Dendritic cell treated with granulocyte-macrophage colony-stimulating factor and Interleukin-4, amounts not matched to agents 40 ng/mL and 50 ng/mL, for 4 days (primary cell): ENCODE measurements at regions of chr11 and their contacts with region 1.

Region 1: GRCh38 chr11:57751676-57752253 is at the start of gene BTBD18:
- H3K4me3 Mint-ChIP-seq: no peak within 1 kb of the TSS
- H3K27ac Mint-ChIP-seq: no peak within 1 kb of the TSS
- H3K4me1 Mint-ChIP-seq: peaks cover 6% of the 10 kb centered on the region
- H3K27me3 Mint-ChIP-seq: no peaks in the 10 kb centered on the region

Region 2: DNA sequence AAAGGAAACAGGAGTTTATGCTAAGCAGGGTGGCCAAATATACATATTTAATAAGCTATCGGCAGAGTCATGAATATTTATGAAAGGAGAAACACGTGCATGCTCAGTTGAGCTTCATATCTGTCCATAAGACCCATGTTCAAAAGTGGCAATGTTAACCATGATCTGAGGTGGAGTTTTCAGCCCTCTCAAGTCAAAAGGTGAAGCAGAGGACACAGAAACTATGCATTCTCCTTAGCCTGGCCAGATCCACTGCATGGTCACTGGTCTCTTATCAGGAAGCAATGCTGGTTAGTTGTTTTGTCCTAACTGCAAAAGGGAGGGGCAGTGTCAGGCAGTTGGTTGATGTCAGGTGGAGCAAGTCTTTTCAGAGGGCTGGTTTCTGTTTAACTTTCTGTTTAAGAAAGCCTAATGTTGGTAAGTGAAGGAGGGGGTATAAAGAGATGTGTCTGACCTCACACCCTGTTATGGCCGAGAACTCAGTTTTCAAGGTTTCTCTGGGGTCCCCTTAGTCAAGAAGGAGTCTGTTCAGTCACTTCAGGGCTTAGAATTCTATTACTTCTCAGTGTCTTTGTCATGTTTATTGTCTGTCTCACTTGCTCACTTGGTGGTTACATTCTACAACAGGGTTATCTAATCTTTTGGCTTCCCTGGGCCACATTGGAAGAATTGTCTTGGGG is 16.0 kb before region 1 on chr11:
- intact Hi-C with region 1: no loop called
- H3K4me3 Mint-ChIP-seq: no peak overlapping the region
- H3K27ac Mint-ChIP-seq: no peak overlapping the region
- H3K4me1 Mint-ChIP-seq: peaks cover 17% of the 10 kb centered on the region
- H3K27me3 Mint-ChIP-seq: no peaks in the 10 kb centered on the region

Region 3: GRCh38 chr11:57800444-57801182 is 48.8 kb after region 1 on chr11:
- intact Hi-C with region 1: loop called (anchors 1 kb)
- H3K4me3 Mint-ChIP-seq: no peak overlapping the region
- H3K27ac Mint-ChIP-seq: peak overlapping the region; percentile 60
- H3K4me1 Mint-ChIP-seq: peaks cover 41% of the 10 kb centered on the region
- H3K27me3 Mint-ChIP-seq: no peaks in the 10 kb centered on the region

Region 4: DNA sequence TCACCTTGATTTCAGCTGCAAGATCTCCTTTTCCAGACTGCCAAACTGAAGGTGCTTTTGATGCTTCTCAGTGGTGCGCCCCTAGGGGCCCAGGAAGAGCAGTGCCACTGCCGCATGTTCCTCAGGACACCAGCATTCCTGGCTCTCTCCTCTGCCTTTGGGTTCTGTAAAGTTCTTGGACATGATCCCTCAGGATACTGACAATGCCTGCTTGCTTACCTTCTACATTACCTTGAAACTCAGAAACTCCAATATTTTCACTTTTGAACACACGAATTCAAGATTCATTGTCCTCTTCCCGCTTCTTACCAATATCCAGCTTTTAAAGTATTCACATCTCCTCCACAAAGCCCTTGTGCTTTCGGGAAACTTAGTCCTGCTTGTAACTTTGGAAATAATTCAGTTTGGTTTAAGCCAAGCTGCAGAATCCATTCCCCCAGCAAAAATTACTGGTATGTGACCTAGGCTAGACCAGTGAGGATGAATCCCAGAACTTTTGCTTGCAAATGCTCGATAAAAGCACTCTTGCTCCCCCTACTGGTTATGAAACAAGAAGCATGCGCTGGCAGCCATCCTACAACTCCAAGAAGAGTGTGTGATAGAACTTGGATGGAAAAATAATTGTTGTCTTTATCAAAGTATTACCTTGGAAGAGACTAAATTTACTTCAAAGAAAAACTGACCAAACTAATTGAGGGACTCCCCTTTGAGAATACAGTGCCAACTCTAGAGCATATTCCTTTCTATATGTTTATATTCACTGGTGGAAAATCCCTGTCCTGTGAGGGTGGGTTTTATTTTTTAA is 772.7 kb after region 1 on chr11:
- intact Hi-C with region 1: loop called (anchors 10 kb)
- H3K4me3 Mint-ChIP-seq: peak overlapping the region; percentile 60
- H3K27ac Mint-ChIP-seq: peak overlapping the region; percentile 51
- H3K4me1 Mint-ChIP-seq: peaks cover 31% of the 10 kb centered on the region
- H3K27me3 Mint-ChIP-seq: no peaks in the 10 kb centered on the region